GM10248 (cell line): ENCODE measurements at regions of chr15 and their contacts with region 1.

Region 1: DNA sequence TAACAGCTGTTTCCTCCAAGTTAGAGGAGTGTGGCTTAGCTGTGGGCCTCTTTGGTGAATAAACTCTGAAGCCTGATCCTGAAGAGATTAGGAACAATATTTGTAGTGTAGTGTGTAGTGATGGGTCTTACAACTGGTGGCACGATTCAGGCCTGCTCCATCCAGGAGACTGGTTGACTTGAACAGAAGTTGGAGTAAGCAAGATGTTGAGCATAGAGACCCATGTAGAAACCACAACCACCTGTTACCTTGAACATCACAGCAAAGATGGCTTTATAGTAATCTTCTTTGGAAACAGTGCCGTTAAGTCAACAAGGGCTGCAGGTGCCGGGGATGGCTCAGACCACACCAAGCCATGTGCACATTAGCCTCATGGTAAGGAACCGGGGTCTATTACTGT is 74.2 kb upstream of the RASGRP1 start:
- DNase-seq: no peak
- CTCF ChIP-seq: no peak

Region 2: DNA sequence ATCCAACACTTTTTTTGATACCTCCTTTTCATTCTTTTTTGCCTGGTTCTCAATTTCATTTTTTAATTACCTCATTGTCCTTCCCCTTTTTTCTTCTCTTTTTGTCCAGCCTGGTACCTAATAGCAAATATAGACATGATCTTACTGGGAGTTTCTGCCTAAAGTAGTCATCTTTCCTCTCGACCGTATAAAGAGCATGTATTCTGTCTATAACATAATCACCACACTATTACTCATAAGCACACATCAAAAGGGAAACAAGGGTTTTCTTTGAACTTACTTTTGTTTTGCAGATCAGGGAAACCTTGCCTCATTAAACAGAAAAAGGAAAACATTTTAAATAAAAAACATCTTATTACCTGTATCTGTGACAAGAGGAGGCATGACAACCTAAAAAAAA is 151.9 kb before region 1 on chr15:
- CTCF ChIA-PET with region 1: no interaction called
- POLR2A ChIA-PET with region 1: no interaction called
- DNase-seq: no peak
- CTCF ChIP-seq: no peak

Region 3: DNA sequence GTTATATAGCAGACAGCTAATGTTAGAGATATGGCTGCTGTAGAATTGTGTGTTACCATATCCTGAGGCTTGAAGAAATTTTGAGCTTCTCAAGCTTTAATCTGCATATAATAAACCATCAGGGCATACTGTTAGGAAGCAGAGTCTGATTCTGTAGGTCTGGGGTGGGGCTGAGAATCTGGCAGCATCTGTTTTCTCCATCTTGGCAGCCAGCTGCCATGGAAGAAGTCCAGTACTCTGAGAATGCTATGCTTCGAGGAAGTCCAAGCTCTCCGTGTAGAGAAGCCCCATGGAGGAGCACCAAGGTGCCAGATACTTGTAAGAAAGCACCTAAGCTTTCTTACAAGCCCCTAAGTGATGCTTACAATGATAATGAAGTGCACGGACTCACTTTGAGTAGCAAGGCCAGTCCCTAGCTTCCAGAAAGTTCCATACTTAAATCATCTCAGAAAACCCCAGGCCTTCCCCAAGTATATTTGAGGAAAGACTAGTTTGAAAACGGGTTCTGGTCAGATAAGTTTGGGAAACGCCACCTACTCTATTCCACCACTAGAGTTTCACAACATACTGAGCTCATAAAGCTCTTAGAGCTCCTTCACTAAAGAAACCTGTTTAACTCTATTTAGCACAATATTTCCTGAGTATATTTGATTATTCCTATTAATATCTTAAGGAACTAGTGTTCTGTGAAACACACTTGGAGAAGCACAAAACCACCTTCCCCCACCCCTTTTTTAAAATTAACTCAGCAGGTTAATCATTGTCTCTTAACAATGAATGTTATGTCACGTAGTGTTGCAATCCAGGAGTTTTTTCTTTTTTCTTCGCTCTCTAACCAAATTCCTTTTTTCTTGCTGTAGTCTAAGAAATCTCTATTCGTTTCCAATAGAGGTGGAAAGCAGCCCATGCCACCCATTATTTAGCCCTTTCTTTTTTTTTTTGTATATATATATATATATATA is 14.3 kb before region 1 on chr15:
- CTCF ChIA-PET with region 1: interaction called, 16 read pairs
- POLR2A ChIA-PET with region 1: no interaction called
- DNase-seq: no peak
- CTCF ChIP-seq: no peak

Region 4: GRCh38 chr15:38818157-38818790 is 179.5 kb after region 1 on chr15:
- CTCF ChIA-PET with region 1: no interaction called
- POLR2A ChIA-PET with region 1: no interaction called
- DNase-seq: no peak
- CTCF ChIP-seq: no peak